B cell (primary cell): ENCODE measurements at regions of chr7 and their contacts with region 1.

Region 1: DNA sequence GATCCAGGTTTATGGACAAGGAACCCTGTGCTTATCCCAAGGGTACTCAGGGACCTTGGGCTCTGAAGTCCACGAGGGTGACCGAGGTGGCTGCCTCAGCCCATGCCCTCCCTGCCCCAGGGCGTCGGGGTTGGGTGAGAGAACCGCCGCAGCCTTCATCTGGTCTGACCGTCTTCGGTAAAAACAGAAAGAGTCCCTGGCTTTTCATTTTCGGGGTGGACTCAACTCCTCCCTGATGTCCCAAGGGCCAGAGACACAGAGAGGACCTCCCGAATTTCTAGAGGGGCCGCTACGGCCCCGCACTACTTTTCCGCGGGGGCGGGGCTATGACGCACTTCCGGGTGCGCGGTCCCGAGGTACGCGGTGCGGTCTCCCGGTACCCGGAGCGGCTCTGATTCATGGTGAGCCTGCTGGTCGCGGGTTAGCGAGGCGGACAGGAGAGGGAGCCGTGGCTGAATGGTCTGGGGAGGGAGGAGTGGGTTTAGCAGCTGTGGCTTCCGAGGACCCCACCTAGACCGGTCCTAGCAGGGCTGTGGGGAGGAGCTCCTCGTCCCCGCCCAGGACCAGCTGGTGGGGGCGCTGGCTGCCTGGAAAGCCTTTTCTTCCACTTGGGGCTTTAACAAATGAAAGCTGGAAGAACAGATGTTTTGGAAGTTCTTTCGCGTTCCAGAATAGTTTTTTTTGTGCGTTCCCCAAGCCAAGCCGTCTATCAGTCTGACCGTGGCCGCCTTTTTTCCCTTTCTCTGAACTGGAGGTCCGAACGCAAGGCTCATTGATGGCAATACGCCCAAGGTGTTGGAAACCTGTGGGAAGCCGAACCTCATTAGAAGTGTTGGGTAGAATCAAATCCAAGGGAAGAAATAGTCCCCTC is at the start of gene ZSCAN21:
- DNase-seq: peak; percentile 91
- ATAC-seq: peak; percentile 90
- H3K4me3 ChIP-seq: peak within 1 kb of the TSS; percentile 69 to 97 (median 92)
- H3K4me3 Mint-ChIP-seq: peak within 1 kb of the TSS; percentile 97
- H3K27ac ChIP-seq: peak within 1 kb of the TSS; percentile 89 to 95
- H3K27ac Mint-ChIP-seq: peak within 1 kb of the TSS; percentile 97
- H3K4me1 ChIP-seq: peaks cover 6 to 17% of the 10 kb centered on the region in 2 donors
- H3K4me1 Mint-ChIP-seq: peaks cover 19% of the 10 kb centered on the region
- H3K27me3 ChIP-seq: no peaks in the 10 kb centered on the region
- H3K27me3 Mint-ChIP-seq: no peaks in the 10 kb centered on the region
- CTCF ChIP-seq: no peak
- total RNA-seq, gene ZSCAN21: 12.9 and 13.2 TPM in 2 replicates

Region 2: GRCh38 chr7:98795741-98796493 is 1253.8 kb before region 1 on chr7:
- CTCF ChIA-PET with region 1: no interaction called
- POLR2A ChIA-PET with region 1: no interaction called
- intact Hi-C with region 1: no loop called
- DNase-seq: no peak
- ATAC-seq: no peak
- H3K4me3 ChIP-seq: no peak overlapping the region
- H3K4me3 Mint-ChIP-seq: no peak overlapping the region
- H3K27ac ChIP-seq: no peak overlapping the region
- H3K27ac Mint-ChIP-seq: no peak overlapping the region
- H3K4me1 ChIP-seq: no peaks in the 10 kb centered on the region
- H3K4me1 Mint-ChIP-seq: peaks cover 4% of the 10 kb centered on the region
- H3K27me3 ChIP-seq: peaks cover 0 to 14% (median 0%) of the 10 kb centered on the region in 4 experiments
- H3K27me3 Mint-ChIP-seq: peaks cover 22% of the 10 kb centered on the region
- CTCF ChIP-seq: no peak

Region 3: DNA sequence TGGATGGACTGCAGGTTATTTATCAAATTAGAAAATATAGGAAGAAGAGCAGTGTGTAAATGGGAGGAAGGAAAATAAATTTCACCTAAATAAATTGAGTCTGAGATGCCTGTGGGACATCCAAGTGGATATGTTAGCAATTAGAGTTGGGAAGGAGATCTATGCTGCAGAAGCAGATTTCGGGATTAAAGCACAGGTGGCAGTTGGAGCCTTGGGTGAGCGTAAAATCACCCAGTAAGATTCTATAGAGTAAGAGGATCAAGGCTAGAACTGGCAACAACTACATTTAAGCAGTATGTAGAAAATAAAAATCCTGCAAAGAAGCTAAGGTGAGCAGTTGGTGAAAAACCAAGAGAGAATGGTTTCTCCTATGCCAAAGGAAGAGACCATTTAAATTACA is 138.7 kb before region 1 on chr7:
- CTCF ChIA-PET with region 1: interaction called, 7 read pairs
- POLR2A ChIA-PET with region 1: no interaction called
- intact Hi-C with region 1: loop called (anchors 2 kb)
- DNase-seq: no peak
- ATAC-seq: no peak
- H3K4me3 ChIP-seq: no peak overlapping the region
- H3K4me3 Mint-ChIP-seq: no peak overlapping the region
- H3K27ac ChIP-seq: no peak overlapping the region
- H3K27ac Mint-ChIP-seq: no peak overlapping the region
- H3K4me1 ChIP-seq: peaks cover 5 to 6% of the 10 kb centered on the region in 2 donors
- H3K4me1 Mint-ChIP-seq: peaks cover 27% of the 10 kb centered on the region
- H3K27me3 ChIP-seq: no peaks in the 10 kb centered on the region
- H3K27me3 Mint-ChIP-seq: no peaks in the 10 kb centered on the region
- CTCF ChIP-seq: no peak

Region 4: DNA sequence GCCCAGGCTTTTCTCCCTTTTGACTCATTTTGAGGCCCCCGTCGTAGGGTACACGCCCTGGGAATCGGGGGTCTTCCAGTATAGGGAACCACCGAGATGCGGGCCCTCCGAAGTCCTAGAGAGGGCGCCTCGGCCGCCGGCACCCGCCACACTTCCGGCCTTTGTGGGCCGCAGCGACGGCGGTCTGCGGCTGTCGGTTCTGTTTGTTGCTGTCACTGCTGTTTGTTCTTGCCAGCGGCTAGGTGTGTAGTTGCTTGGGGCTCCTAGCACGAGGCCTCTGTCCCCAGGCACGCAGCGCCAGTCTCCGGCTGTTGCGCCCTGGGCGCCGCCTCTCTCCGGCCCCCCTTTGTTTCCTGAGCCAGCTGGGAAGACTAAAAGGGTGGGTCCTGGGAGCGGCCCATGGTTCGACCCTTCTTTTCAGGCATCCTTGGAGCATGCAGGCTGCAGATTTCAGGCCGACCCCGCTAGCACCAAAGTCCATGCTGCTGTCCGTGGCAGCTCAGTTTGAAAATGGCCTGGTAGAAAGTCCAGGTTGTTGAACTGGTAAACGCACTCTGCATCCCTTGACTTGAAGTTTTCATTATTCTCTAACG is 52.0 kb before region 1 on chr7:
- CTCF ChIA-PET with region 1: interaction called, 3 read pairs
- POLR2A ChIA-PET with region 1: no interaction called
- intact Hi-C with region 1: loop called (anchors 1 kb)
- DNase-seq: peak; percentile 81
- ATAC-seq: peak; percentile 90
- H3K4me3 ChIP-seq: peak overlapping the region in 4 of 5 experiments; percentile 59 to 85 (median 68)
- H3K4me3 Mint-ChIP-seq: peak overlapping the region; percentile 83
- H3K27ac ChIP-seq: peak overlapping the region; percentile 58 to 82
- H3K27ac Mint-ChIP-seq: peak overlapping the region; percentile 80
- H3K4me1 ChIP-seq: peaks cover 13 to 14% of the 10 kb centered on the region in 2 donors
- H3K4me1 Mint-ChIP-seq: peaks cover 10% of the 10 kb centered on the region
- H3K27me3 ChIP-seq: peaks cover 0 to 6% (median 0%) of the 10 kb centered on the region in 4 experiments
- H3K27me3 Mint-ChIP-seq: peaks cover 8% of the 10 kb centered on the region
- CTCF ChIP-seq: no peak

Region 5: GRCh38 chr7:100015232-100016209 is 34.2 kb before region 1 on chr7 and contains the start of gene ZKSCAN1:
- CTCF ChIA-PET with region 1: no interaction called
- POLR2A ChIA-PET with region 1: interaction called, 7 read pairs
- intact Hi-C with region 1: loop called (anchors 1 kb)
- DNase-seq: peak; percentile 91
- ATAC-seq: peak; percentile 95
- H3K4me3 ChIP-seq: peak within 1 kb of the TSS; percentile 75 to 89 (median 85)
- H3K4me3 Mint-ChIP-seq: peak within 1 kb of the TSS; percentile 93
- H3K27ac ChIP-seq: peak within 1 kb of the TSS; percentile 80 to 87
- H3K27ac Mint-ChIP-seq: peak within 1 kb of the TSS; percentile 94
- H3K4me1 ChIP-seq: peaks cover 15 to 19% of the 10 kb centered on the region in 2 donors
- H3K4me1 Mint-ChIP-seq: peaks cover 38% of the 10 kb centered on the region
- H3K27me3 ChIP-seq: no peaks in the 10 kb centered on the region
- H3K27me3 Mint-ChIP-seq: peaks cover 6% of the 10 kb centered on the region
- CTCF ChIP-seq: no peak
- total RNA-seq, gene ZKSCAN1: 89.3 and 97.4 TPM in 2 replicates

Region 6: GRCh38 chr7:100101016-100101862 is 51.6 kb after region 1 on chr7 and contains the starts of genes AP4M1 and MCM7:
- CTCF ChIA-PET with region 1: interaction called, 3 read pairs
- POLR2A ChIA-PET with region 1: interaction called, 8 read pairs
- intact Hi-C with region 1: loop called (anchors 1 kb)
- DNase-seq: peak; percentile 97
- ATAC-seq: peak; percentile 86
- H3K4me3 ChIP-seq: peak within 1 kb of the TSS; percentile 85 to 92 (median 90)
- H3K4me3 Mint-ChIP-seq: peak within 1 kb of the TSS; percentile 96
- H3K27ac ChIP-seq: peak within 1 kb of the TSS; percentile 60 to 94
- H3K27ac Mint-ChIP-seq: peak within 1 kb of the TSS; percentile 98
- H3K4me1 ChIP-seq: peaks cover 13 to 24% of the 10 kb centered on the region in 2 donors
- H3K4me1 Mint-ChIP-seq: peaks cover 40% of the 10 kb centered on the region
- H3K27me3 ChIP-seq: no peaks in the 10 kb centered on the region
- H3K27me3 Mint-ChIP-seq: no peaks in the 10 kb centered on the region
- CTCF ChIP-seq: no peak
- total RNA-seq, gene AP4M1: 17.6 and 18.3 TPM in 2 replicates
- total RNA-seq, gene MCM7: 147 and 154 TPM in 2 replicates